CD4-positive, alpha-beta T cell (primary cell): ENCODE measurements at regions of chr9 and their contacts with region 1.

Region 1: GRCh38 chr9:15422372-15423230 is at the start of gene SNAPC3:
- DNase-seq: peak; percentile 82 to 96 (median 90)
- ATAC-seq: peak; percentile 97
- H3K4me3 ChIP-seq: peak within 1 kb of the TSS; percentile 89
- H3K4me3 Mint-ChIP-seq: peak within 1 kb of the TSS; percentile 96
- H3K27ac ChIP-seq: peak within 1 kb of the TSS; percentile 70 to 82
- H3K27ac Mint-ChIP-seq: peak within 1 kb of the TSS; percentile 96
- H3K4me1 ChIP-seq: peaks cover 21% of the 10 kb centered on the region
- H3K4me1 Mint-ChIP-seq: peaks cover 51% of the 10 kb centered on the region
- H3K27me3 ChIP-seq: no peaks in the 10 kb centered on the region
- H3K27me3 Mint-ChIP-seq: no peaks in the 10 kb centered on the region
- CTCF ChIP-seq: no peak
- total RNA-seq, gene SNAPC3: 3.3 to 4.7 TPM

Region 2: DNA sequence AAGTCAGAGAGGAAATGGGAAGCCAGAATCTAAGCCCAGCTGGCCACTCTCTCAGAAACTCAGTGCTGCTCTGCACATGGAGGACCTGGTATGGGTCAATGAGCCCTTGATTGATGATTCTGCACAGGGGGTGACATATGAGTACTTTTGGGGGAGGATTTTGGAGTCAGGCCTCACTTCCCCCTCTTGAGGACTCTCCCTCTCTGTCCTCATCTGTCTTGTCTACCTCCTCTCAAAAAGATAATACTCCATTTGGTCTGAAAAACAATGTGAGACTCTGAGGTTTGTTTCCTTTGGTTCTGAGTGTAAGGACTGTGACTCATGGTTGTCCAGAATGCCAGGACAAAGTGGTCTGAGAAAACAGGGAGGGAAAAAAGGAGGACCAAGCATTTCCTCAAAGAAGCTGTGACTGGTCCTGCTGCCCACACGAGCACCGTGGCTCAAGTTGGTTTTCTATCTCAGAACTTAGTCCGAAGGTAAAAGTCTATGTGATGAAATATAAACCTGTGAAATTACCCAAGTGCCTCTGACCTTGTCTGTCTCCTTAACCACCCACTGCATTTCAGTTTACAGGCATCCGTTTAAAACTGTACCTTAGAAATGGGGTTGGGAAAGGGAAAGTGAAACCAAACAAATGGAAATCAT is 126.7 kb before region 1 on chr9:
- CTCF ChIA-PET with region 1: no interaction called
- POLR2A ChIA-PET with region 1: interaction called, 7 read pairs
- intact Hi-C with region 1: loop called in 1 of 2 experiments (anchors 2 kb)
- DNase-seq: peak in 4 of 14 experiments; percentile 28 to 87 (median 69)
- ATAC-seq: peak; percentile 39
- H3K4me3 ChIP-seq: peak overlapping the region; percentile 54
- H3K4me3 Mint-ChIP-seq: peak overlapping the region; percentile 81
- H3K27ac ChIP-seq: peak overlapping the region; percentile 87 to 88
- H3K27ac Mint-ChIP-seq: peak overlapping the region; percentile 97
- H3K4me1 ChIP-seq: peaks cover 80% of the 10 kb centered on the region
- H3K4me1 Mint-ChIP-seq: peaks cover 88% of the 10 kb centered on the region
- H3K27me3 ChIP-seq: no peaks in the 10 kb centered on the region
- H3K27me3 Mint-ChIP-seq: no peaks in the 10 kb centered on the region
- CTCF ChIP-seq: no peak

Region 3: GRCh38 chr9:15306757-15307534 is 115.7 kb before region 1 on chr9 and contains the start of gene TTC39B:
- CTCF ChIA-PET with region 1: no interaction called
- POLR2A ChIA-PET with region 1: interaction called, 8 read pairs
- intact Hi-C with region 1: loop called in 1 of 2 experiments (anchors 5 kb)
- DNase-seq: peak; percentile 36 to 90 (median 68)
- ATAC-seq: peak; percentile 60
- H3K4me3 ChIP-seq: peak within 1 kb of the TSS; percentile 99
- H3K4me3 Mint-ChIP-seq: peak within 1 kb of the TSS; percentile 99
- H3K27ac ChIP-seq: peak within 1 kb of the TSS; percentile 75 to 82
- H3K27ac Mint-ChIP-seq: peak within 1 kb of the TSS; percentile 87
- H3K4me1 ChIP-seq: peaks cover 34% of the 10 kb centered on the region
- H3K4me1 Mint-ChIP-seq: peaks cover 64% of the 10 kb centered on the region
- H3K27me3 ChIP-seq: no peaks in the 10 kb centered on the region
- H3K27me3 Mint-ChIP-seq: no peaks in the 10 kb centered on the region
- CTCF ChIP-seq: no peak
- total RNA-seq, gene TTC39B: 37.6 to 43.6 TPM

Region 4: DNA sequence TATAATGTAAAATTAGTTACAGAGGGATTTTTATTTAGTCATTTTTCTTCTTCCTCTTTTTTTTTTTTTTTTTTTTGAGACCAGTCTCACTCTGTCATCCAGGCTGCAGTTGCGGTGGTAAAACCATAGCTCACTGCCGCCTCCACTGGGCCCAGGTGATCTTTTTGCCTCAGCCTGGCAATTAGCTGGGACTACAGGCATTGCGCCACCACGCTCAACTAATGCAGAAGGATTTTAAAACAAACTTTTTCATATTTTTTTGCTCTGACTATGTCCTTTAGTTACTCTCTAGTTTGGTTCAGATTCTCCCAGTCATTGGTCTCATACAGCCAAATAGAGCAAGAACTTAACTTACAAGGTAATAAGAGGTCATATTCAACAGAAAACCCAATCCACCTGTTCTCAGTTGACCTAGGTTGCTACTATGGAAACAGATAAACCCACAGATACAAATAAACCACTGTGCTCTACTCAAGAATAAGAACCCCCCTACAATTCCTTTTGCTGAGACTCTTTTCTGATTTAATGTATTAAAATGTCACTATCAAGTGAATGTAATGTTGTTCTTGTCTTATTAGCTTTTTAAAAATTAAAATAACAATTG is 65.4 kb before region 1 on chr9:
- CTCF ChIA-PET with region 1: interaction called, 5 read pairs
- POLR2A ChIA-PET with region 1: no interaction called
- intact Hi-C with region 1: loop called (anchors 2 to 5 kb)
- DNase-seq: peak in 13 of 14 experiments; percentile 14 to 76 (median 36)
- ATAC-seq: peak; percentile 84
- H3K4me3 ChIP-seq: no peak overlapping the region
- H3K4me3 Mint-ChIP-seq: no peak overlapping the region
- H3K27ac ChIP-seq: no peak overlapping the region
- H3K27ac Mint-ChIP-seq: peak overlapping the region; percentile 10
- H3K4me1 ChIP-seq: peaks cover 4% of the 10 kb centered on the region
- H3K4me1 Mint-ChIP-seq: peaks cover 23% of the 10 kb centered on the region
- H3K27me3 ChIP-seq: no peaks in the 10 kb centered on the region
- H3K27me3 Mint-ChIP-seq: no peaks in the 10 kb centered on the region
- CTCF ChIP-seq: no peak

Region 5: GRCh38 chr9:15552636-15553527 is 130.3 kb after region 1 on chr9 and contains the start of gene CCDC171:
- CTCF ChIA-PET with region 1: no interaction called
- POLR2A ChIA-PET with region 1: interaction called, 15 read pairs
- intact Hi-C with region 1: loop called in 1 of 2 experiments (anchors 5 kb)
- DNase-seq: peak; percentile 70 to 96 (median 80)
- ATAC-seq: peak; percentile 85
- H3K4me3 ChIP-seq: peak within 1 kb of the TSS; percentile 97
- H3K4me3 Mint-ChIP-seq: peak within 1 kb of the TSS; percentile 95
- H3K27ac ChIP-seq: no peak within 1 kb of the TSS
- H3K27ac Mint-ChIP-seq: peak within 1 kb of the TSS; percentile 80
- H3K4me1 ChIP-seq: peaks cover 21% of the 10 kb centered on the region
- H3K4me1 Mint-ChIP-seq: peaks cover 15% of the 10 kb centered on the region
- H3K27me3 ChIP-seq: no peaks in the 10 kb centered on the region
- H3K27me3 Mint-ChIP-seq: no peaks in the 10 kb centered on the region
- CTCF ChIP-seq: no peak
- total RNA-seq, gene CCDC171: 0.49 to 1.1 TPM